PC-3 (cell line): ENCODE measurements at regions of chr1 and their contacts with region 1.

Region 1: DNA sequence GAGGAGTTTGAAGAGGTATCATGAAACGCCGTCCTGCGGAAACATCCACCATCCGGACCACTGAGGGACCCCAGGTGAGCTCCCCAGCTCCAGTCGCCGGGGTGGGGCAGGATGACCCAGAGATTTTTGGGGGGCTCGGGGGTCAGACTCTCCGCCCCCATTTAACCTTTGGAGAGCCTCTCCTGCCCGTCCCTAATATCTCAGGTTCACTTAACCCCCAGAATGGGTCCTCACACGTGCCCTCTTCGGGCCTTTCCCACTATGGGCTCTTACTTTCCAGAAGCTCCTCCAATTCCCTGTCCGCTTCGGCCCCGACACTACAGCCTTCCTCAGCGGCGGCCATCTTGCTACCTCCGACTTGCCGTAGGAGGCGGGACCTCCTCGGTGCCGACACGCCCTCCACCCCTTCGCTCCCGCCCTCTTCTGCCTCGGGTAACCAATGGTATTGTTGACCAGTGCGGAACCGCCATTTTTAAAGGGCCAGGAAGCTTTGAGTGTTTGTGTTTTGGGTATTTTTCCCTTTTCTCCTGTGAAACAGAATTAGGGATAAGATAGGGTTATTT is at the start of gene PEX19:
- DNase-seq: peak; percentile 94
- ATAC-seq: peak; percentile 95
- H3K4me3 ChIP-seq: peak within 1 kb of the TSS; percentile 93
- H3K27ac ChIP-seq: peak within 1 kb of the TSS; percentile 41
- H3K4me1 ChIP-seq: peaks cover 18% of the 10 kb centered on the region
- H3K27me3 ChIP-seq: no peaks in the 10 kb centered on the region
- CTCF ChIP-seq: no peak
- total RNA-seq, gene PEX19: 63.2 and 65.4 TPM in 2 replicates

Region 2: GRCh38 chr1:160261893-160262794 is 22.7 kb before region 1 on chr1 and contains the start of gene DCAF8:
- CTCF ChIA-PET with region 1: interaction called, 7 read pairs
- POLR2A ChIA-PET with region 1: no interaction called
- intact Hi-C with region 1: loop called (anchors 2 kb)
- DNase-seq: peak; percentile 99
- ATAC-seq: peak; percentile 88
- H3K4me3 ChIP-seq: peak within 1 kb of the TSS; percentile 90
- H3K27ac ChIP-seq: peak within 1 kb of the TSS; percentile 93
- H3K4me1 ChIP-seq: peaks cover 39% of the 10 kb centered on the region
- H3K27me3 ChIP-seq: no peaks in the 10 kb centered on the region
- CTCF ChIP-seq: no peak
- total RNA-seq, gene DCAF8: 122 and 139 TPM in 2 replicates

Region 3: DNA sequence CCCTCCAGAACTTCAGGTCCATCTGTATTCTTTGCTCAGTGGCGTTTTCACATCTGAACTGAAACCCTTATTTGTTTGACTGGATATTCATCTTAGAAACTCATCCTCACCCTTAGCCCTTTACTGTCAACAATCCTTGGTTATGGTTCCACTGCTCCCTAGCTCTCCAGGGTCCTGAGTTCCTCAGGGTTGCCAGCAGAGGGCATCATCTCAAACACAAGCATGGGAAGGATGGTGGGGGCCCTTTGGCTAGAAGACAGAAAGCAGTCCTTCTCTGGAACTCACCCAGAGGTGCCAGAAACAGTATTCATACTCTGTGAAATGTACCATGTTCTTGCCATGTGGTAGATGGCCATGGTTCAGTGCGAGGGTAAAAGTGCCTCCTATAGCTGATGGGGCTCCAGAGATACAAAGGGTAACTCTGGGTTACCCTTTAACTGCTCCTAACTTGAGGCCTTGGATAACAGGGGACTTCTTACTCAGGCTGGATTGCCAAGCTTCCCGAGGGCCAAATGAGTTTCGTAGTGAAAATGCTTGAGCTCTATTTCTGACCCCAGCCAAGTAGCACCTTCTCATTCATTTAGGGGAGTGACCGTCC is 69.6 kb after region 1 on chr1:
- CTCF ChIA-PET with region 1: no interaction called
- POLR2A ChIA-PET with region 1: no interaction called
- intact Hi-C with region 1: no loop called
- DNase-seq: peak; percentile 37
- ATAC-seq: peak; percentile 48; the same call in 1 of the 2 replicates
- H3K4me3 ChIP-seq: no peak overlapping the region
- H3K27ac ChIP-seq: no peak overlapping the region
- H3K4me1 ChIP-seq: no peaks in the 10 kb centered on the region
- H3K27me3 ChIP-seq: no peaks in the 10 kb centered on the region
- CTCF ChIP-seq: peak; percentile 84